H1 (cell line): ENCODE measurements at regions of chr1 and their contacts with region 1.

Region 1: DNA sequence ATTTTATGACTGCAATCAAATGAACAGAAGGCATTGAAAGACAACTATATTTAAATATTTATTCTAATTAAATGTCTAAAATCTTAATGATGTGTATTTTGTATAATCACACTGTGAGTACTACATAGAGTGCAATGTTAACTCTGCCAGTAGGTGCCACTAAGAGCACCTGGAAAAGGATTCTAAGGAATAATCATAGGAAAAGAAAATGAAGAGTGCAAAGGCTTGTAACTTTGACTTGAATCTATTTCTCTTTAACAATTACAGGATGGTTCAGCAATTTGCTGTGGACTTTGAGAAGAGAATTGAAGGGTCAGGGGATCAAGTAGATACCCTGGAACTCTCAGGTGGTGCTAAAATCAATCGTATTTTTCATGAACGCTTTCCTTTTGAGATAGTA is 200.4 kb downstream of the DNM3 start:
- DNase-seq: no peak
- H3K4me3 ChIP-seq: no peak overlapping the region
- H3K27ac ChIP-seq: no peak overlapping the region
- H3K4me1 ChIP-seq: no peaks in the 10 kb centered on the region
- H3K27me3 ChIP-seq: no peaks in the 10 kb centered on the region
- CTCF ChIP-seq: peak in 2 of 3 experiments; percentile 12 to 30; a peak in 2 of 4 replicates
- EP300 ChIP-seq: no peak
- POLR2A ChIP-seq: no peak
- RAD21 ChIP-seq: peak; percentile 56 to 59

Region 2: GRCh38 chr1:172024516-172024915 is 17.2 kb before region 1 on chr1:
- CTCF ChIA-PET with region 1: interaction called, 11 read pairs
- POLR2A ChIA-PET with region 1: no interaction called
- DNase-seq: no peak
- H3K4me3 ChIP-seq: no peak overlapping the region
- H3K27ac ChIP-seq: no peak overlapping the region; the same call in 1 of the 2 replicates
- H3K4me1 ChIP-seq: peaks cover 0 to 4% (median 2%) of the 10 kb centered on the region in 4 experiments; a peak in 1 of 7 replicates
- H3K27me3 ChIP-seq: no peaks in the 10 kb centered on the region
- CTCF ChIP-seq: no peak
- EP300 ChIP-seq: no peak
- POLR2A ChIP-seq: no peak
- RAD21 ChIP-seq: no peak

Region 3: DNA sequence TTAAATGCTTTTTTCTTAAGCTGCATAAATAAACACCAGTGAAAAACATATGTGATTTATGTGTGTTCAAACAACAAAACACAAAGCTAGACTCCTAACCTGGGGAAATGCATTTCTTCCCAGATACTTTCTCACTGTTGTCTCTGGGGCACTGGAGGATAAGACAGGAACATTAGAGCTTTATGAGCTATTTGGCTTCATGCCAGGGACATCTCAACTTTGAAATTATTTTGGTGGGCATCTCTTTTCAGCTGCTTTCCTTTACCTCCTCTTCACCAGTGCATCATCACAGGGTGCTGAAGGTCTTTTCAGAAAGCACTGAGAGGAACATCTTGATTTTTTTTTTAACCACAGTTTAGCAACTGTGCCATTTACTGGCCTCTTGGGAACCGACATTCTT is 12.4 kb after region 1 on chr1:
- CTCF ChIA-PET with region 1: interaction called, 11 read pairs
- POLR2A ChIA-PET with region 1: no interaction called
- DNase-seq: no peak
- H3K4me3 ChIP-seq: no peak overlapping the region
- H3K27ac ChIP-seq: no peak overlapping the region
- H3K4me1 ChIP-seq: no peaks in the 10 kb centered on the region
- H3K27me3 ChIP-seq: no peaks in the 10 kb centered on the region
- CTCF ChIP-seq: no peak
- EP300 ChIP-seq: no peak
- POLR2A ChIP-seq: no peak
- RAD21 ChIP-seq: no peak

Region 4: GRCh38 chr1:172154551-172154950 is 112.8 kb after region 1 on chr1:
- CTCF ChIA-PET with region 1: no interaction called
- POLR2A ChIA-PET with region 1: no interaction called
- DNase-seq: no peak
- H3K4me3 ChIP-seq: no peak overlapping the region
- H3K27ac ChIP-seq: no peak overlapping the region
- H3K4me1 ChIP-seq: no peaks in the 10 kb centered on the region
- H3K27me3 ChIP-seq: no peaks in the 10 kb centered on the region
- CTCF ChIP-seq: no peak
- EP300 ChIP-seq: no peak
- POLR2A ChIP-seq: no peak
- RAD21 ChIP-seq: no peak

Region 5: DNA sequence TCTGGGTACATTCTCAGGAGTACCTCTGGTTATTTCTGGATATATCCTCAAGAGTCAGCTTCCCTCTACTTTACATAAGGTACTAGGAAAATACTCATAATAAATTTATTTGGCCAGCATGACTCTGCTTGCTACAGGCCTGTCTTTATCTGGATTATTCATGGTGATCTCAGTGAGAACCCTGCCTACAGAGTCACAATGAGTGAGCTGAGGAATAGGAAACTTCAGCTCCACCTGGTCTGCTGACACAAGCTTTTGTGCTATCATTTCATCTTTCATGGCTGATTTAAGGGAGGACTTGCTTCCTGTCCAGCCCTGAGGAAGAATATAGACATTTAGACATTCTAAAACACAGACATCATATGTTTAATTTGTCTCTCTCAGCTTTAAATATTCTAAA is 471.7 kb after region 1 on chr1:
- CTCF ChIA-PET with region 1: no interaction called
- POLR2A ChIA-PET with region 1: no interaction called
- DNase-seq: no peak
- H3K4me3 ChIP-seq: no peak overlapping the region
- H3K27ac ChIP-seq: no peak overlapping the region
- H3K4me1 ChIP-seq: no peaks in the 10 kb centered on the region
- H3K27me3 ChIP-seq: no peaks in the 10 kb centered on the region
- CTCF ChIP-seq: no peak
- EP300 ChIP-seq: no peak
- POLR2A ChIP-seq: no peak
- RAD21 ChIP-seq: no peak